Heart left ventricle (tissue), 16 donors: ENCODE measurements at regions of chr1 and their contacts with region 1.

Region 1: GRCh38 chr1:7975212-7975865 is 13.8 kb downstream of the PARK7 start:
- DNase-seq: peak in 4 of 5 donors; percentile 60 to 74 (median 64)
- ATAC-seq: peak; percentile 92 to 96 (median 94)
- H3K4me3 ChIP-seq: no peak overlapping the region
- H3K27ac ChIP-seq: no peak overlapping the region
- H3K4me1 ChIP-seq: peaks cover 0 to 10% (median 1%) of the 10 kb centered on the region in 12 donors
- H3K27me3 ChIP-seq: no peaks in the 10 kb centered on the region
- CTCF ChIP-seq: peak; percentile 65 to 89 (median 82)
- POLR2A ChIP-seq: no peak

Region 2: DNA sequence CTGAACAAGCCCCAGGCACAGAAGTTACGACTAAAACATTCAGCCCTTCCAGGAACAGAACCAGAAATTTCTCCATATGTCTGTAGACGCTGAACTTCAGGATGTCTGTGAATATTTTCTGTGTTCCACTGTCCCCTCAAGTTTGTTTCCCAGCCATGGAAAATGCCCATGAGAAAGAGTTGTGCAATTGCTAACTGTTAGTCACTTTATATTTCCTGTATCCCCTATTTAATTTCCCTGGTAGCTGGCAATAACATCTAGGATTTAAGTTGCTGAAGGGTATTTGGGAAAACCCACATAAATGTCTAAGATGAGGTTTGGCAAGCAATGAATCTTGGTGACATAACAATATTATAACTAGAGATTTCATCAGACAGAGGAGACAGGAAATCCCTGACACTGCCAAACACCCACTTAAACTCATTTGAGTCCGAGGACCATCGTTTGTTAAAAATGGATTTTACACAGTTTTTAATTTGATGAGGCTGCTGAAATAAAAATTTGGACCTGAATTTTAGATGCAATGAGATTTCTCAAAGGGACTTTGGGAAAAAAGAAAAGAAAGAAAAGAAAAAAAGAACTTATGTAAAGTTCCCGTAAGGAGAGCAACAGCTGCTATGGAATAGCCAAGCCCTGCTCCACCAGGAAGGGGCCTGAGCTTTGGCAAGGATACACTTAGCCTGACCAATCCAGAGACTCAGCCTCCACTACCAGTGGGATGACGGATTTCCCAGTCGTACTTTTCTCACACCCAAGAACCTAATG is 72.5 kb after region 1 on chr1:
- intact Hi-C with region 1: no loop called
- DNase-seq: peak in 4 of 5 donors; percentile 42 to 55 (median 46)
- ATAC-seq: peak; percentile 82 to 95 (median 90)
- H3K4me3 ChIP-seq: peak overlapping the region in 1 of 12 donors; percentile 4
- H3K27ac ChIP-seq: peak overlapping the region in 11 of 12 donors; percentile 12 to 69 (median 48)
- H3K4me1 ChIP-seq: peaks cover 0 to 18% (median 0%) of the 10 kb centered on the region in 12 donors
- H3K27me3 ChIP-seq: no peaks in the 10 kb centered on the region
- CTCF ChIP-seq: no peak
- POLR2A ChIP-seq: no peak

Region 3: DNA sequence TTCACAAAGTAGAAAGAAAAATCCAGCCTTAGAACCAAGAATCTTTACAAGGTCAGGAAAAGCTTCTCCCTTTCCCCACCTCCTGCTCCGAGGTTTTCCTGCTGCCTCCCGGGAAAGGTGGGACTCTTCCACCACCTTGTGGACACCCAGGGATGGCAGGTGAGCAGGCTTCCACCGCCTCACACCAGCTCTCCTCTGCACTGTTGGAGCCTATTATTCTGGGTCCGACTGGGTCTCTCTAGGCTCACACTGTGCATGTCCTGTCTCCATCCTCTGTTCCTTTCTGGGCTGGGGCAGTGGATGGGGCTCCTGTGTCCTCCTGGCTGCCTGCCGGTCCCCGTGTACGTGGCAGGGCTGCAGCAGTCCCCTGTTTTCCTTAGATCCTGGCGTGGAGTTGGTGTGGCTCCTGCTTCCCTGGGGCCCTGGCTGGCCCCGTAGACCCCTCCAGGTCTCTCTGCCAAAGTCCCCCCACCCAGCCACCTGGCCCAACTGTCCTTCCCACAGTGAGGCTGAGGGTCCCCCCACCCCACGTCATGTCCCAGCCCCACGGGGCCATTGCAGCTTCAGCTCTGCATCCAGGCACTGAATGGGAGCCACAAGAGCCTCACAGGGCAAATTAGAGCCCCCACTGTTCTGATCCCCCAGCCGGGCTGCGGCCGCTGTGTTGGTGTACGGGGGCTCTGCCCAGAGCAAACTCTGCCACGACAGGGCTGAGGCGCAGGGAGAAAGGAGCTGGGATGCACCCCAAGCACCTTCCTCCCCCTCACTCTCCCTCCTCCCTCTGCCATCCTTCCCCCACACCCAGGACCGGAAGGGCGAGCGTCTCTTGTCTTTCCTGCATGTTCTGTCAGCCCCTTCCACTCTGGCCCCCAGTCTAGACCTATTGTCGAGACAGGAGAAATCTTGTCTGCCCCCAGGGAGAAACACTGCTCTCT is 339.3 kb after region 1 on chr1:
- intact Hi-C with region 1: loop called in 6 of 10 experiments (anchors 2 to 5 kb)
- DNase-seq: peak in 4 of 5 donors; percentile 65 to 69 (median 66)
- ATAC-seq: peak; percentile 64 to 87 (median 80)
- H3K4me3 ChIP-seq: no peak overlapping the region
- H3K27ac ChIP-seq: no peak overlapping the region
- H3K4me1 ChIP-seq: peaks cover 0 to 31% (median 15%) of the 10 kb centered on the region in 12 donors
- H3K27me3 ChIP-seq: peaks cover 0 to 13% (median 0%) of the 10 kb centered on the region in 9 donors
- CTCF ChIP-seq: peak; percentile 60 to 88 (median 82)
- POLR2A ChIP-seq: no peak

Region 4: DNA sequence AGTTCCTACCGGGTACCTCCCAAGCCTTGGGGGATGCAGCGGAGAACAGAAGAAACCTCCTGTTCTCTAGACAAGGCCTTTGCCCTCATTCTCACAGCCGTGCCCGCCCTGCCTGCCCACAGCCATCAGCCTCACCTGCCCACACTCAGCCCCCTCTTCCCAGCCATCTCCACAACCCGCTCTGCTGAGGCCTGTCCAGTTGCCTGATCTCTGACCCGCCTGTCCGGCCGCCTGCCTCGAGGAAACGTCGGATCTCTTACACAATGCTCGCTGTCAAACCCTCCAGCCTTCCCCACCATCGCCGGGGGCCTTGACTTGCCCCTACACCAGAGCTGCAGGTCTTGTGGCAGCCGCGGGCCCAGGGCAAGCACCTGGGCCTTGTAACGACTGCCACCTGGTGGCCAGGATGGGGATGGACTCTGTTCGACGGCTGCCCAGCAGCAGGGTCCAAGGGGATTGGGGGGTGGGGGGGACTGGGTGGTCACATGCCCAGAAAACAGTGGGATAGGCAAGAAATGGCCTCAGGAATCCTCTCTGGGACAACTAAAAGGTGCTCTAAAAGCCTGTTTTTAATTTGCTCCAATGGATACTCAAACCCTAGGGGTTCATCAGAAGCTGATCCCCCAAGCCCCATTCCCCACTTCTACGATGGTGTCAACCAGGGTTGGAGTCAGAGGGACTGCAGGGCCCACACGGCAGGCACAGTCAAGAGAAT is 373.6 kb after region 1 on chr1:
- intact Hi-C with region 1: loop called in 4 of 10 experiments (anchors 2 to 5 kb)
- DNase-seq: peak in 3 of 5 donors; percentile 66 to 75 (median 73)
- ATAC-seq: peak in 3 of 4 donors; percentile 42 to 61 (median 49)
- H3K4me3 ChIP-seq: no peak overlapping the region
- H3K27ac ChIP-seq: peak overlapping the region in 1 of 12 donors; percentile 65
- H3K4me1 ChIP-seq: peaks cover 0 to 50% (median 26%) of the 10 kb centered on the region in 12 donors
- H3K27me3 ChIP-seq: no peaks in the 10 kb centered on the region
- CTCF ChIP-seq: peak; percentile 76 to 91 (median 84)
- POLR2A ChIP-seq: no peak